A549 (cell line): ENCODE measurements at regions of chr9 and their contacts with region 1.

Region 1: GRCh38 chr9:121082075-121082474 is 7.3 kb downstream of the CNTRL start:
- DNase-seq: no peak
- ATAC-seq: no peak; a peak in 1 of 6 replicates
- H3K4me3 ChIP-seq: no peak overlapping the region
- H3K27ac ChIP-seq: no peak overlapping the region
- H3K4me1 ChIP-seq: no peaks in the 10 kb centered on the region
- CTCF ChIP-seq: no peak
- EP300 ChIP-seq: no peak
- POLR2A ChIP-seq: no peak
- RAD21 ChIP-seq: no peak

Region 2: DNA sequence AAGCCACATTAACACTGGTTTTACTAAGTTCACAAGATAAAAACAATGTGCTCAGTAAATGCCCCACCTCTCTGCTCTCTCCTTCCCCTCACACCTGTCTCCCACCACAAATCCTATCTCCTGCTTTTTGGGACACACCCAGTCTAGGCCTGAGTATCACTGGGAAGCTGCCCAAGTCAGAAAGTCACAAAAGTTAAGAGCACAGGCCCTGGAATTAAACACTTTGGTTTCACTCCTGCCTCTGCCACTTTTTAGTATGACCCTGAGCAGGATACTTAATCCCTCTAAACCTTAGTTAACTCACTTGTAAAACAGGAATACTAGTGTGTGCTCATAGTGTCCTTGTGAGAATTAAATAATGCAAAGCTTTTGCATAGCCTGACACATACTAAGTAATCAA is 43.3 kb before region 1 on chr9:
- CTCF ChIA-PET with region 1: no interaction called
- POLR2A ChIA-PET with region 1: no interaction called
- DNase-seq: no peak
- ATAC-seq: no peak
- H3K4me3 ChIP-seq: no peak overlapping the region
- H3K27ac ChIP-seq: no peak overlapping the region
- H3K4me1 ChIP-seq: peaks cover 16% of the 10 kb centered on the region
- CTCF ChIP-seq: no peak
- EP300 ChIP-seq: no peak
- POLR2A ChIP-seq: no peak
- RAD21 ChIP-seq: no peak

Region 3: DNA sequence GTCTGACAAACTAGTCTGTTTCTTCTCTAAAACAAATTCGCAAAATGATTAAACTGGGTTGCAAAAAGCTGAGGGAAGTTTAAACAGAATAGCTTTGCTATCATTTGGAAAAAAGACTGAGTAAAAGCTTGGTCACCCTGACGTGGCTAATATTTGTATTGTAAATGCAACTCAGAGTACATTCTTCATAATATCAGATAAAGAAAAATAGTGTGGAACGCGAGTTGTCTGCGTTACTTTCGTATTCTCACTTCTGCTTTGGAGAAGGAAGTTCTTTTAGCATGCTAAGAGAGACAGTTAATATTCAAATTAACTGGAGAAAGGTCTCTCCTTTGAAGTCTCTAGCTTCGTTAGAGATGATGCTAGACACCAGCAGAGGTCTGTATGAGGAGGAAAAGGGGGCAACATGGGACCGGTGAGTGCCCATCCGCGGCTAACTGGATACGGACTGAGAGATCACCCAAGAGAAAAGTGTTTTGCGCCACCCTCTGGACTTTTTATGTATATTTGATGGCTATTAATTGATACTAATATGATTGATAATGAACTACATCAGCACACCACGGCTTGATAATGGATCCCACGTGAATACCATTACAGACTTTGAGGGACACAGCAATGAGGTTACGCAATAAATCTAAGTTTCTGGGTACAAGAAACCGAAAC is 10.2 kb before region 1 on chr9:
- CTCF ChIA-PET with region 1: interaction called, 14 read pairs
- POLR2A ChIA-PET with region 1: no interaction called
- DNase-seq: peak; percentile 71 to 73
- ATAC-seq: peak; percentile 33 to 36; a peak in 3 of 6 replicates
- H3K4me3 ChIP-seq: peak overlapping the region; percentile 50
- H3K27ac ChIP-seq: peak overlapping the region; percentile 74 to 76
- H3K4me1 ChIP-seq: peaks cover 25% of the 10 kb centered on the region
- CTCF ChIP-seq: peak; percentile 75
- EP300 ChIP-seq: no peak
- POLR2A ChIP-seq: no peak
- RAD21 ChIP-seq: peak; percentile 71; a peak in 4 of 5 replicates

Region 4: DNA sequence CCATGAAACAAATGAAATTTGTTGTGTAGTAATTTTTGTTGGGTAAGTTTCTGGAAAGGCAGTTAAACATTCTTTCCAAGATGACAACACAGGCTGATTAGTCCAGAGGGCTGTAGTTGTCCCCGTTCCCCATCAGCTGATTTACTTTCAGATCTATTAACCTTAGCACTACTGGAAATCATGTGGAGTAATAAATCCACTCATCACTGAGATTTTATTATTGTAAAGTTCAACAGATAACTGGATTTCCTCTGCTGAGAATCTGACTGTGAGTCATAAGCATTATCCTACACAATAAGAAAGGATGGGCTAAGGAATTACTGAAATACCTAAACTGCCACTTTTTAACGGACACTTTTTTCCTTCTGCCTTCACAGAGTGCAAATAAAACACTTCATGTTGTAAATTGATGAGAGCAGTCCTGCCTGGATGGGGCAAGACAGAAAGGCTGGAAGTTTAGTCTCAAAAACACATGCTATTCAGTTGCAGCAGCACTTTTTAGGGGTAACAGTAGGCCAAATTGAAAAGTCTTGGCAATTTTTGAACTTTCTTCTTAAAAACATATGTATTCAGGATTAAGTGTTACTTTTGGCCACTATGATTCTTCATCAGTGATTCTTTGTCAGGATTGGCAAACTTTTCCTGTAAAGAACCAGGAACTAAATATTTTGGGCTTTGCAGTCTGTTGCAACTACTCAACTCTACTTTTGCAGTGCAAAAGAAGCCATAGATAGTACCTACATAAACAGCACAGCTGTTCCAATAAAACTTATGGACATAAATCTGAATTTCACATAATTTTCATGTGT is 280.9 kb after region 1 on chr9:
- CTCF ChIA-PET with region 1: no interaction called
- POLR2A ChIA-PET with region 1: no interaction called
- DNase-seq: peak in 1 of 2 experiments; percentile 48
- ATAC-seq: peak; percentile 62 to 79; a peak in 5 of 6 replicates
- H3K4me3 ChIP-seq: no peak overlapping the region; the same call in 2 of the 3 replicates
- H3K27ac ChIP-seq: peak overlapping the region; percentile 55 to 77; a peak in 5 of 6 replicates
- H3K4me1 ChIP-seq: peaks cover 88% of the 10 kb centered on the region
- CTCF ChIP-seq: no peak
- EP300 ChIP-seq: no peak
- POLR2A ChIP-seq: no peak
- RAD21 ChIP-seq: no peak